BJ (cell line): ENCODE measurements at regions of chr3 and their contacts with region 1.

Region 1: GRCh38 chr3:112088944-112089343 is 2.8 kb downstream of the C3orf52 start:
- DNase-seq: no peak
- H3K4me3 ChIP-seq: no peak overlapping the region
- H3K27me3 ChIP-seq: no peaks in the 10 kb centered on the region
- CTCF ChIP-seq: no peak

Region 2: GRCh38 chr3:111668912-111669488 is 419.9 kb before region 1 on chr3:
- CTCF ChIA-PET with region 1: no interaction called
- POLR2A ChIA-PET with region 1: interaction called, 16 read pairs
- DNase-seq: no peak
- H3K4me3 ChIP-seq: no peak overlapping the region
- H3K27me3 ChIP-seq: no peaks in the 10 kb centered on the region
- CTCF ChIP-seq: peak; percentile 75

Region 3: DNA sequence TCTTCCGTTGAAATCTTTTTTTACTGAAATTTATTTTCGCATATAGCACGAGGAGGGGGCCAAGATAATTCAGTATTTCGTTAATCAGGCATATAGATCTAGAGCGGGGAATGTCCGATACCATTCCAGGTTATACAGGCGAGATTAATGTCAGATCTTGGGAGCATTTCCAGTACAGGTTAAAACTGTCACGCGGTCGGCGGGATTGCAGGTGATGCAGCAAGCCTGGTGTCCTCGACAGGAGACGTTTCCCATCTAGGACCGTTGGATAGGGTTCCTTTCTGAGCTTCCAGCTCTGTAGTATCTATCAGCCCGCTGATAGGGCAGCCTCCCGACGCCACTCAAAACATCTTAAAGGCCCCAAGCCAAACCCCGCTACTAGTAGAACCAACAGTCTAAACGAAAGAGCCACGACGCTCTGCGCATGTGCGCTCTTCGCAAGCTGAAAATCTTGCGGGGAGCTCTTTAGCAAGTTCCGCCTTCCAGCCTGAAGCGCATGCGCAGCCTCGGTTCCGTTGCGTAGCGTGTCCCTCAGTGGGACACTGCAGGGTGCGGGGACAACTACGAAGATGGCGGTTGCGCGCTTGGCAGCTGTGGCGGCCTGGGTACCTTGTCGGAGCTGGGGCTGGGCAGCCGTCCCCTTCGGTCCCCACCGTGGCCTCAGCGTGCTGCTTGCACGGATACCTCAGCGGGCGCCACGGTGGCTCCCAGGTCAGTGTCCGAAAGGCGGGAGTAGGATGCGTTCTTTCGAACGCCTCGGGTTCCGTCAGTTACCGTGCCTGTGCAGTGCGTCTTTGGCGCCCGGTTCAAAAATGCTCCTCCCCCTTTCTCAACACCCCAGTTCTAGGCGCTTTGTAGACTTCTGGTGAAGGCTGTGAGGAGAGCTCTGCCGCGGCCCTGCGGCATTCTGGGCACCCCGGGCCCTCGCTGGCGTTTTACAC is 110.2 kb before region 1 on chr3 and contains the start of gene ABHD10:
- CTCF ChIA-PET with region 1: no interaction called
- POLR2A ChIA-PET with region 1: no interaction called
- DNase-seq: peak; percentile 95
- H3K4me3 ChIP-seq: peak within 1 kb of the TSS; percentile 78
- H3K27me3 ChIP-seq: no peaks in the 10 kb centered on the region
- CTCF ChIP-seq: no peak
- polyA plus RNA-seq, gene ABHD10: 12.6 and 21.1 TPM in 2 replicates